ENCODE measurements at regions of chr13 and their contacts with region 1.

Region 1: DNA sequence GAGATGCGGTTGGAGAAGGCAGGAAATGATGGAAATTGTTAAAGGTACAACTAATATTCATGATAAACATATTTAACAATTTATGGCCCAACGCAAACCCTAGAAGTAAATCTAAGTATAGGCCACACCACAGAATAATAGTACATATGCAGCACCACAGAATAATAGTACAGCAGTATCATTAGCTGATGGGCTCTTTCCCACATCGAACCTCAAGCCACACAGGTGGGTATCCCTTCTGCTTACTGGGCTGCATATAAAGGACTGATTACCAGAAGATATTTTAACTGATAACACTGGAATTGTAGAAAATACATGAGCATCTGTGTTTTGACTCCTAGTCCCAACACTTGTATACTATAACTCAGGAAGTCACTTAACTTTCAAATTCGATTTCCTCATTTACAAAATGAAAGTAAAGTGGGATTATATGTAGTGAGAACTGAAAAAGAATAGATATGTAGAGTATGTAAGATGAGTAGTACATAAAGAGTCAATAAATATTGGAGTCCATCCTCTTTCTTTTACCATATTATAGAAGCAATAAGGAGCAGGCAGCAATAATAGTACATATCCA is 91.5 kb downstream of the TSC22D1 start:
- DNase-seq: no peak
- H3K4me3 ChIP-seq: no peak overlapping the region
- H3K27ac ChIP-seq: no peak overlapping the region
- H3K4me1 ChIP-seq: peaks cover 0 to 10% (median 3%) of the 10 kb centered on the region in 4 donors
- H3K27me3 ChIP-seq: no peaks in the 10 kb centered on the region
- CTCF ChIP-seq: no peak
- EP300 ChIP-seq: no peak
- POLR2A ChIP-seq: no peak

Region 2: DNA sequence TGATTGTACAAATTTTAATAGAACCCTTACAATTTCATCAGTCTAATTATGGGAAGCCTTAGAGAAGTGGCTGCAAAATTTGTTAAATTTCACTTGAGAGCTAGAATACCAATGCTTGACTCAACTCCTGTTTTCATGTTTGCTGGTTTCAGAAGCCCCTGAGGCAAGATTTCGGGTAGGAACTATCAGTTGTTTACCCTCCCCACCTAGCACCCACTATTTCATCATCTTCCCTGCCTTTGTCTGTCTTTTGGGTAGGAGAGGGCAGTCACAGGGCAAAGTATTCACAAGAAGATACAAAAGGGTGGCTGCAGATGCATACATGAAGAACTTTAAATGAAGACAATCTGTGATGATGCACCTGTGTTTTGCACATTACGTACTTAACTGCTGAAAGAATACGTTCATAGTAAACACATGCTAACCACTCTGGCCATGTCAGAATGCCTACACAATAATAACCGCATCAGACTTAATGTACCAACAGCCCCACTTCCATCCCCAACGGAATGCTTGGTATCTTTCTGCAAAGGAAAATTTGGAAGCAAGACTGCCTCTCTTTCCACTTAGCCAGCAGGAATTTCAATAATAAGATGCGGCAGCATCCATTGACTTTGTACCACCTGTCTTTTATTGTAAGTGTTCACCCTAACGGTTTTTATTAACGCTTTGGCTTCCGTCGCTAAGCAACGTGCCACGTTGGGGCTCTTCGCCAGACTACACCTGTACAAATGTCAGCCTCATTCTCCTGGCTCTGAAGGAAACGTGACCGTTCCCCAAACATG is 825.9 kb after region 1 on chr13:
- in situ Hi-C with region 1: loop called in 2 of 4 experiments (anchors 25 kb)
- intact Hi-C with region 1: no loop called
- DNase-seq: no peak
- H3K4me3 ChIP-seq: peak overlapping the region in 3 of 4 donors; percentile 33 to 52 (median 45)
- H3K27ac ChIP-seq: no peak overlapping the region
- H3K4me1 ChIP-seq: peaks cover 5 to 12% (median 10%) of the 10 kb centered on the region in 4 donors
- H3K27me3 ChIP-seq: no peaks in the 10 kb centered on the region
- CTCF ChIP-seq: no peak
- EP300 ChIP-seq: no peak
- POLR2A ChIP-seq: no peak

Region 3: GRCh38 chr13:45592758-45593157 is 1108.1 kb after region 1 on chr13:
- in situ Hi-C with region 1: no loop called
- intact Hi-C with region 1: no loop called
- DNase-seq: no peak
- H3K4me3 ChIP-seq: no peak overlapping the region
- H3K27ac ChIP-seq: no peak overlapping the region
- H3K4me1 ChIP-seq: no peaks in the 10 kb centered on the region
- H3K27me3 ChIP-seq: peaks cover 6% of the 10 kb centered on the region
- CTCF ChIP-seq: no peak
- EP300 ChIP-seq: no peak
- POLR2A ChIP-seq: no peak